SK-N-SH (cell line): ENCODE measurements at regions of chr10 and their contacts with region 1.

Region 1: GRCh38 chr10:112434988-112435619 is 11.6 kb downstream of the ZDHHC6 start:
- DNase-seq: no peak
- H3K4me3 ChIP-seq: no peak overlapping the region
- H3K27ac ChIP-seq: no peak overlapping the region
- H3K4me1 ChIP-seq: no peaks in the 10 kb centered on the region
- H3K27me3 ChIP-seq: no peaks in the 10 kb centered on the region
- CTCF ChIP-seq: peak; percentile 66
- EP300 ChIP-seq: no peak
- RAD21 ChIP-seq: peak; percentile 66

Region 2: DNA sequence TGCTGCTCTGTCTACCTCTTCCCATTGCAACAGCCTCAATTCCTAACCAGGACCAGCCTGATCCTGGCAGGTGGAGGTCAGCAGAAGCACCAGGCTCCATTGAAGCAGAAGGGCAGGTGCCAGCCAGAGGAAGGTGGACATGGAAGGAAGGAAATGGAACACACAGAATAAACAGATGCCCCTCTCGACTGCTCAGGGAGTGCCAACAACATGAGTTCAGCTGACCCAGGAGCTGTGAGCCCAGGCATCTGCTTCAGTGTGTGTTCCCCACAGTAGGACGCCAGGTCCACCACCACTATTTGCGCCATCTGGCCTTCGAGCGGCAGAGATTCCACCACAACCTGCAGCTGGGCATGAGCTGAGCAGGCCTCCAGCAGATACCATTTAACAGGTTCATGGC is 308.2 kb before region 1 on chr10:
- CTCF ChIA-PET with region 1: no interaction called
- POLR2A ChIA-PET with region 1: no interaction called
- DNase-seq: no peak
- H3K4me3 ChIP-seq: no peak overlapping the region
- H3K27ac ChIP-seq: no peak overlapping the region
- H3K4me1 ChIP-seq: peaks cover 0 to 32% of the 10 kb centered on the region in 2 experiments; a peak in 1 of 4 replicates
- H3K27me3 ChIP-seq: no peaks in the 10 kb centered on the region
- CTCF ChIP-seq: no peak
- EP300 ChIP-seq: no peak
- RAD21 ChIP-seq: no peak

Region 3: GRCh38 chr10:112314822-112315474 is 120.2 kb before region 1 on chr10:
- CTCF ChIA-PET with region 1: interaction called, 17 read pairs
- POLR2A ChIA-PET with region 1: no interaction called
- DNase-seq: peak; percentile 76
- H3K4me3 ChIP-seq: no peak overlapping the region; a peak in 1 of 4 replicates
- H3K27ac ChIP-seq: no peak overlapping the region
- H3K4me1 ChIP-seq: peaks cover 0 to 3% of the 10 kb centered on the region in 2 experiments; a peak in 1 of 4 replicates
- H3K27me3 ChIP-seq: no peaks in the 10 kb centered on the region
- CTCF ChIP-seq: peak; percentile 95
- EP300 ChIP-seq: no peak
- RAD21 ChIP-seq: peak; percentile 97

Region 4: DNA sequence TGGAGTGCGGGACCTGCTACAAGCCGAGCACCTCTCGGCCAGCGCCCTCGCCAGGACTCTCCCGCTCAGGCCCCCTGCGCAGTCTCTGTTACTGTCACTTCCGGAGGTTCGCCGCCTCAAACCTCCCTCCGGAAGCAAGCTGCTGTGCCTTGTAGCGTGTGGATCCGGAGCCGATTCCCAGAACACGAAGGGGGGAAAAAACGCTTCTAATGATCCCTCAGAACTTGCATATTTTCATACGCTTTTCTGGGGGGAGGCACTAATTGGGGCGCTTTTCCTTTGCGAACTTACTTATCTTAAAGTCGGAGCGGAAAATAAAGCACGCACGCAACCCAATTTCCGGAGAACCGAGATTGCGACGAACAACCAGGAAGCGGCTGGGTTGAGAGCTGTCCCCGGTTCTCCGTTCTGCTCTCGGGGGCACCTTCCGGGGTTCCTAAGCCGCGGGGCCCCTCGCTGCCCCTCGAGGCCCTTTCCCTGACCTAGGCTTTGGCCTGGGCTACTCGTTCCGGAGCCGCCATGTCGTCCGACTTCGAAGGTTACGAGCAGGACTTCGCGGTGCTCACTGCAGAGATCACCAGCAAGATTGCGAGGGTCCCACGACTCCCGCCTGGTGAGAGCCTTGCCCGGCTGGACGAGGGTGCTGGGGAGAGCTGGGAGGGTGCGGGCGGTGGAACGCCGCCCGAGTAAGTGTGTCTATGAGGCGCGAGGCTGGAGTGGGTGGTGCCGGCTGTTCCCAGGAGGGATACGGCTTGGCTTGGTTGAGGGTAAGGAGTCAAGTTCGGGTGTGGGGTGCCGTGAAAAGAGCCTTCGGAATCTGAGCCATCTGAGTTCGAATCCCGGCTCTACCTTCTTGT is 12.0 kb after region 1 on chr10 and contains the starts of genes VTI1A and ZDHHC6:
- CTCF ChIA-PET with region 1: interaction called, 19 read pairs
- POLR2A ChIA-PET with region 1: interaction called, 3 read pairs
- DNase-seq: peak; percentile 88
- H3K4me3 ChIP-seq: peak within 1 kb of the TSS; percentile 87 to 91
- H3K27ac ChIP-seq: peak within 1 kb of the TSS; percentile 93 to 96
- H3K4me1 ChIP-seq: peaks cover 6 to 11% of the 10 kb centered on the region in 2 experiments; a peak in 3 of 4 replicates
- H3K27me3 ChIP-seq: no peaks in the 10 kb centered on the region
- CTCF ChIP-seq: peak; percentile 31; the same call in 1 of the 2 replicates
- EP300 ChIP-seq: no peak
- RAD21 ChIP-seq: no peak
- polyA plus RNA-seq, gene VTI1A: 8.3 and 12.4 TPM in 2 replicates
- polyA plus RNA-seq, gene ZDHHC6: 12.5 and 20.7 TPM in 2 replicates